Mammary epithelial cell (primary cell): ENCODE measurements at regions of chr13 and their contacts with region 1.

Region 1: DNA sequence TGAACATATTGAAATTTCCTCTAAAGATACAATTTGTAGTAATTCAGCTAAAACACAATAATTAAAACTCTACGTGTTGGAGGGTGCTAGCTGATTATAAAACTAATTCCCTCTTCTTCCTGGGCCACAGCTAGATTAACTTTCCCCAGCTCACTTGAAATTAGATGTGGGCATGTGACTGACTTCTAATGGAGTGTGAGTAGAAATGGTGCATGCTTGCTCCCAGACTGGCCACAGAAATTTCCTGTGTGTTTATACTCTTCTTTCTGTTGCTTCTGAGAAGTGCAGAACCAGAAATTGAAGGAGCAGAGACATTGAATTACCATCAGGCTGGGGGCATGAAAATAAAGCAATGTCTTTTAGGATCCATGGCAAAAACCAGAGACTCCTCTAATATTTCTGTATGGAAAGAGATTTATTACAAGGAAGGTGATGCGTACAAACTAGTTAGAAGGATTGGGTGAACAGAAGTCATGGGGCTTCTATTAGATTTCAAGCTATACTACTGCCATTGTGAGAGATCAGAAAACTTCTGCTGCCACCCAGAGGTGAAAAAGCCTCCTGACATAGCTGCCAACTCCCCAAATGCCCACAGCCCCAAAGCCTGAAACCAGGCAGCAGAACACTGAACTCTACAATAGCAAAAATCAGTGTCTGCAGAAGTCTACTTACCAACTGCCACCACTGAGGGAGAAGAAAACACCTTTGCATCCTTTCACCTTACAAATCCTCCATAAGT is 379.2 kb upstream of the MIR17HG start:
- DNase-seq: peak; percentile 9
- H3K4me3 ChIP-seq: no peak overlapping the region
- H3K27ac ChIP-seq: no peak overlapping the region
- H3K4me1 ChIP-seq: no peaks in the 10 kb centered on the region
- H3K27me3 ChIP-seq: peaks cover 4% of the 10 kb centered on the region
- CTCF ChIP-seq: peak; percentile 14 to 52

Region 2: DNA sequence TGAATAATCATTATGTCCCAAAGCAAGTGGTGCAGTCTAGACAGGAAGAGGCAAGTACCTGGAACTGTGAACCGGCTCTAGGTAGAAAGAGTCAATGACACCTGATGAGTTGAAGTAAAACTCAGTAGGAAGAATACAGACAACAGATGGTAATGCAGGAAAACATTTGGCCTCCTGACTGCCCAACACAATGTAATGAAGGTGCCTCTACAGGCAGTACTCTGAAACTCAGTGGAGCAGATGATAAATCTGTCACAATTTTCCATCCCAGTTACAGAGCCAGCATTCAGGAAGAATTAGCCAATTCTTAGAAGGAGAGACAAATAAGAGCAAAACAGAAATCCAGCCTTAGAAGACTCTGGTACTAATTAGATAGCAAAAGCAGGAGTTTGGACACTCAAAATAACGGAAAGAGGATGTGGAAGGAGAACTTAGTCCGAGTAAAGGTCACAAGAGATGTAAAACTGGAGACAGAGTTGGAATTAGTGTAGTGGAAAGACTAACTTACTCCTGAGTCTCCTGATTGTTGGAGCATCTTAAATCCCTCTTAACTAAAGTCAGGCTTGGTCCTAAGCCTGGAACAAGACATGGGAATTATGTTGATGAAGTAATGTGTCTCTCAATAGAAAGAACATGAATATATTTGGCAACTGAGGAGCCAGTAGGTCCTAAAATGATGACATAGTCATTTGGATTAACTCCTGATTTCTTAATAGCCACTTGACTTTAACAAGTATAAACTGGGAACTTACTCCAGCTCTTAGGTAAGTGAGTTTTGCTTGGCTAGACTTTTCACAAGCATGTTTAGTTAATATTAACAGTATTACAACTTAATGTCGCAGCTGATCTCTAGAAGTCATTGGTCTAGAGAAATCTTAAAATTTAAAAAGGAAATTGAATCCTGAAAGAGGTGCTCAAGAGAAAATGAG is 78.2 kb before region 1 on chr13:
- CTCF ChIA-PET with region 1: no interaction called
- dilution Hi-C with region 1: no loop called
- in situ Hi-C with region 1: no loop called
- intact Hi-C with region 1: loop called (anchors 5 kb)
- DNase-seq: no peak
- H3K4me3 ChIP-seq: no peak overlapping the region
- H3K27ac ChIP-seq: no peak overlapping the region
- H3K4me1 ChIP-seq: no peaks in the 10 kb centered on the region
- H3K27me3 ChIP-seq: peaks cover 5% of the 10 kb centered on the region
- CTCF ChIP-seq: no peak

Region 3: DNA sequence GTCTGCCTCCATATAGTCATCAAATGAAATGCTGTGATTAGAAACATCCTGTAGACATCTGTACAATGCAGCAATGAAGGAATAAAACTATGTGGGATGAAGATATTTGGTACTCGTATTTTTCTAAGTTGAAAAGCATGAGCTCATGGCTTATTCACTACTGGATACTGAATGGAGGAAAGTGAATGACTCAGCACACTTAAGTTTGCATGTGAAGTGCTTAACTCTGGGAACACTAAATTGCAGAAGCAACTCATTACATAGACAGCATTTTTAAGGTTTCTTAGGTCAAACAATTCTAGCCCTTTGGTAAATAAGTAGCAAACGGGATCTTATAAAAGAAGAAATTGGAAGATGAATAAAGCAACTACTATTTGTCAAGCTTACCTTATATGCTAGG is 49.8 kb before region 1 on chr13:
- CTCF ChIA-PET with region 1: no interaction called
- dilution Hi-C with region 1: loop called (anchors 5 kb)
- in situ Hi-C with region 1: no loop called
- intact Hi-C with region 1: no loop called
- DNase-seq: peak; percentile 1
- H3K4me3 ChIP-seq: no peak overlapping the region
- H3K27ac ChIP-seq: no peak overlapping the region
- H3K4me1 ChIP-seq: no peaks in the 10 kb centered on the region
- H3K27me3 ChIP-seq: no peaks in the 10 kb centered on the region
- CTCF ChIP-seq: no peak

Region 4: GRCh38 chr13:91031508-91031907 is 63.2 kb after region 1 on chr13:
- CTCF ChIA-PET with region 1: no interaction called
- dilution Hi-C with region 1: no loop called
- in situ Hi-C with region 1: no loop called
- intact Hi-C with region 1: no loop called
- DNase-seq: no peak
- H3K4me3 ChIP-seq: no peak overlapping the region
- H3K27ac ChIP-seq: no peak overlapping the region
- H3K4me1 ChIP-seq: no peaks in the 10 kb centered on the region
- H3K27me3 ChIP-seq: no peaks in the 10 kb centered on the region
- CTCF ChIP-seq: no peak